ENCODE measurements at regions of chr12 and their contacts with region 1.

Region 1: GRCh38 chr12:121499929-121500793 is 80.7 kb downstream of the KDM2B start:
- DNase-seq: peak; percentile 85
- H3K4me3 Mint-ChIP-seq: no peak overlapping the region
- H3K27ac Mint-ChIP-seq: no peak overlapping the region
- H3K4me1 Mint-ChIP-seq: no peaks in the 10 kb centered on the region
- H3K27me3 Mint-ChIP-seq: no peaks in the 10 kb centered on the region
- CTCF ChIP-seq: peak; percentile 94

Region 2: GRCh38 chr12:121532503-121533393 is 32.6 kb after region 1 on chr12:
- CTCF ChIA-PET with region 1: interaction called, 4 read pairs
- intact Hi-C with region 1: loop called (anchors 1 kb)
- DNase-seq: no peak
- H3K4me3 Mint-ChIP-seq: no peak overlapping the region
- H3K27ac Mint-ChIP-seq: no peak overlapping the region
- H3K4me1 Mint-ChIP-seq: peaks cover 18% of the 10 kb centered on the region
- H3K27me3 Mint-ChIP-seq: no peaks in the 10 kb centered on the region
- CTCF ChIP-seq: no peak

Region 3: GRCh38 chr12:121678716-121679580 is 178.8 kb after region 1 on chr12:
- CTCF ChIA-PET with region 1: interaction called, 3 read pairs
- intact Hi-C with region 1: loop called (anchors 5 kb)
- DNase-seq: no peak
- H3K4me3 Mint-ChIP-seq: no peak overlapping the region
- H3K27ac Mint-ChIP-seq: no peak overlapping the region
- H3K4me1 Mint-ChIP-seq: peaks cover 5% of the 10 kb centered on the region
- H3K27me3 Mint-ChIP-seq: no peaks in the 10 kb centered on the region
- CTCF ChIP-seq: no peak